IMR-90 (cell line): ENCODE measurements at regions of chr17 and their contacts with region 1.

Region 1: GRCh38 chr17:43360739-43361505 is 37.9 kb upstream of the ARL4D start:
- DNase-seq: peak; percentile 100
- ATAC-seq: peak; percentile 85
- H3K4me3 ChIP-seq: peak overlapping the region; percentile 42
- H3K27ac ChIP-seq: peak overlapping the region; percentile 51
- H3K4me1 ChIP-seq: peaks cover 15% of the 10 kb centered on the region
- H3K27me3 ChIP-seq: no peaks in the 10 kb centered on the region
- CTCF ChIP-seq: no peak
- POLR2A ChIP-seq: peak; percentile 100
- RAD21 ChIP-seq: peak; percentile 33

Region 2: GRCh38 chr17:42997984-42998938 is 362.7 kb before region 1 on chr17 and contains the start of gene RPL27:
- CTCF ChIA-PET with region 1: no interaction called
- POLR2A ChIA-PET with region 1: interaction called, 5 read pairs
- dilution Hi-C with region 1: no loop called
- in situ Hi-C with region 1: loop called (anchors 25 kb)
- intact Hi-C with region 1: no loop called
- DNase-seq: peak; percentile 100
- ATAC-seq: peak; percentile 95
- H3K4me3 ChIP-seq: peak within 1 kb of the TSS; percentile 64
- H3K27ac ChIP-seq: peak within 1 kb of the TSS; percentile 86
- H3K4me1 ChIP-seq: peaks cover 6% of the 10 kb centered on the region
- H3K27me3 ChIP-seq: no peaks in the 10 kb centered on the region
- CTCF ChIP-seq: peak; percentile 88
- POLR2A ChIP-seq: peak; percentile 97
- RAD21 ChIP-seq: peak; percentile 67
- total RNA-seq, gene RPL27: 1,595 and 1,663 TPM in 2 replicates

Region 3: GRCh38 chr17:43316522-43317142 is 44.3 kb before region 1 on chr17:
- CTCF ChIA-PET with region 1: no interaction called
- POLR2A ChIA-PET with region 1: interaction called, 68 read pairs
- dilution Hi-C with region 1: no loop called
- in situ Hi-C with region 1: no loop called
- intact Hi-C with region 1: no loop called
- DNase-seq: no peak
- ATAC-seq: no peak
- H3K4me3 ChIP-seq: no peak overlapping the region
- H3K27ac ChIP-seq: no peak overlapping the region
- H3K4me1 ChIP-seq: no peaks in the 10 kb centered on the region
- H3K27me3 ChIP-seq: no peaks in the 10 kb centered on the region
- CTCF ChIP-seq: no peak
- POLR2A ChIP-seq: no peak
- RAD21 ChIP-seq: no peak

Region 4: DNA sequence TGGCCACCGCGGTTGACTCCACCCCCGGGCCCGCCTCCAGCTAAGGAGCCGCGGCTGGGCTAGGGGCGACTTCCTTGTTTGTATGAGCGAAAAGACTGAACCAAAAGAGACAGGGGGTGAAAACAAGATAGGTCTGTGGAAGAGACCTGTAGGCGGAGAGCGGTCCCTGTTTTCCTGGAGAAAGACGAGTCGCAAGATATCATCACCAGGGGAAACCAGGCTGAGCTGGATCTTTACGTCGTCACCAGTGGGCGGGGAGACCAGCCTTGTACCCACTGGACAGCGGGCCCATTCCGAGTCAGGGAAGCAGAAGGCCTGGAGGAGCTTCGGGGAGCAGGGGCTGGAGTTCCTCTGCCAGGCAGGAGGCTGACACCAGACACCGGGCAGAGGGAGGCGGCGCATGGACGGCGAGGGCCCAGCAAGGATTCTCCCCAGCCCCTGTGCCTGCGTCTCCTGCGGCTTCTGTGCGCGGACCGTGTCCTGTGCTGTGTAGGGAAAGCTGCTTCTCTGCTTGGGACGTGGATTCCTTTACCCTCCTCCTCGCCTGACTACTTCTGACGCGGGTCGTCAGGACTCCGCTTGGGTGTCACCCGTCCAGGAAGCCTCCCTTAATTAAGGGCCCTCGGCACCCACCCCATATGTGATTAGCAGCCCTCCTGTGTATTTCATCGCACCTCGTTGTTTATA is 27.6 kb after region 1 on chr17:
- CTCF ChIA-PET with region 1: interaction called, 6 read pairs
- POLR2A ChIA-PET with region 1: interaction called, 35 read pairs
- dilution Hi-C with region 1: no loop called
- in situ Hi-C with region 1: no loop called
- intact Hi-C with region 1: no loop called
- DNase-seq: peak; percentile 92
- ATAC-seq: peak; percentile 89
- H3K4me3 ChIP-seq: peak overlapping the region; percentile 60
- H3K27ac ChIP-seq: peak overlapping the region; percentile 97
- H3K4me1 ChIP-seq: no peaks in the 10 kb centered on the region
- H3K27me3 ChIP-seq: no peaks in the 10 kb centered on the region; the same call in 1 of the 2 replicates
- CTCF ChIP-seq: no peak
- POLR2A ChIP-seq: peak; percentile 95
- RAD21 ChIP-seq: no peak

Region 5: GRCh38 chr17:43400943-43401692 is 40.2 kb after region 1 on chr17:
- CTCF ChIA-PET with region 1: no interaction called
- POLR2A ChIA-PET with region 1: interaction called, 18 read pairs
- dilution Hi-C with region 1: no loop called
- in situ Hi-C with region 1: no loop called
- intact Hi-C with region 1: no loop called
- DNase-seq: peak; percentile 88
- ATAC-seq: peak; percentile 70
- H3K4me3 ChIP-seq: peak overlapping the region; percentile 82; the same call in 1 of the 2 replicates
- H3K27ac ChIP-seq: peak overlapping the region; percentile 35
- H3K4me1 ChIP-seq: peaks cover 19% of the 10 kb centered on the region
- H3K27me3 ChIP-seq: no peaks in the 10 kb centered on the region
- CTCF ChIP-seq: no peak
- POLR2A ChIP-seq: peak; percentile 48; the same call in 1 of the 2 replicates
- RAD21 ChIP-seq: peak; percentile 33